ENCODE measurements at regions of chr3 and their contacts with region 1.

Region 1: GRCh38 chr3:98522244-98523090 is at the start of gene CLDND1:
- DNase-seq: peak; percentile 94 to 97
- ATAC-seq: peak; percentile 93 to 96
- H3K4me3 ChIP-seq: peak within 1 kb of the TSS; percentile 72 to 87 (median 75)
- H3K27ac ChIP-seq: peak within 1 kb of the TSS; percentile 90 to 98 (median 95)
- H3K4me1 ChIP-seq: peaks cover 14 to 20% of the 10 kb centered on the region in 2 donors
- H3K27me3 ChIP-seq: no peaks in the 10 kb centered on the region
- CTCF ChIP-seq: peak in 1 of 5 experiments; percentile 9
- POLR2A ChIP-seq: peak; percentile 87 to 88
- total RNA-seq, gene CLDND1: 47.5 to 115 (median 87.2) TPM

Region 2: DNA sequence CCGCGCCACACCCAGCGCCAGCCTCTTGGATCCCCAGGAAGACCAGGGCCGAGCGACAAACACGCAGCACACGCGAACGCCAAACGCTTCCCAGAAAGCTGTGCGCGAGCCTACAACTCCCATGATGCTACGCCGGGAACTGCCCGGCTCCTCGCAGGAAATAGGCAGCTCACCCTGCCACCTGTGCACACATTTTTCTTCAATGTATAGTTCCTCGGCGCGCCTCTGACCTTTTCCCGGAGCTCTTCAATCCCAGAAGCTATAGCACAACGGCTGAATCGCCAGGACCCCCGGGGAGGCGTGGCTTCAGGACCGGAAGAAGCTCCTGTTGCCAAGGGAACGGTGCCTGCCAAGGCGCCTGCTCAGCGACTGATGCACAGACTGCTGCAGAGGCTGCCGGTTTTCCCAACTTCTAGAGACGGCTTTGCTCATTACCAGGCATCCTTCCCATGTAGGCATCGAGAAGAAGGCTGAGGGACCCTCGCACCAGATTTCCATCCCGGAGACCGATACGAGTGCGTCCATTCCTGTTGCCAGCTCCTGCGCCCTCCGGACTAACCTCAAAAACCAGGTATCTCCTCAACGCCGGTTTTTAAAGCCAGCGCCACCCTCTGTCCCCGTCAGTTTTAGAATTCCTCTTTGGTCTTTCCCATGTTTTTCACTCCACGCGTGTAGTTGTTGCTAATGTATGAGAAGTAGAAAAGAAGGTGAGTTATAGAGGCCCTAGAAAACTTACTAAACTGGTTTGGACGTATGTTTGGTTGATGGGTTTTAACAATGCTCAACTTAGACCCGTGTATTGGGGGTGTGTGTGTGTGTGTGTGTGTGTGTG is 757.8 kb before region 1 on chr3 and contains the start of gene ARL6:
- in situ Hi-C with region 1: no loop called
- intact Hi-C with region 1: loop called (anchors 2 kb)
- DNase-seq: peak; percentile 55 to 71
- ATAC-seq: peak; percentile 98 to 99
- H3K4me3 ChIP-seq: peak within 1 kb of the TSS; percentile 84 to 97 (median 96)
- H3K27ac ChIP-seq: peak within 1 kb of the TSS; percentile 71 to 85 (median 78)
- H3K4me1 ChIP-seq: peaks cover 8 to 20% of the 10 kb centered on the region in 2 donors
- H3K27me3 ChIP-seq: no peaks in the 10 kb centered on the region
- CTCF ChIP-seq: no peak
- POLR2A ChIP-seq: no peak
- total RNA-seq, gene ARL6: 1.2 to 4.3 (median 3.2) TPM

Region 3: GRCh38 chr3:97821810-97822775 is 700.4 kb before region 1 on chr3 and contains the start of gene CRYBG3:
- in situ Hi-C with region 1: no loop called
- intact Hi-C with region 1: loop called (anchors 2 kb)
- DNase-seq: peak; percentile 70 to 74
- ATAC-seq: peak; percentile 69 to 81
- H3K4me3 ChIP-seq: peak within 1 kb of the TSS; percentile 94 to 97 (median 96)
- H3K27ac ChIP-seq: peak within 1 kb of the TSS; percentile 89 to 97 (median 95)
- H3K4me1 ChIP-seq: peaks cover 39 to 40% of the 10 kb centered on the region in 2 donors
- H3K27me3 ChIP-seq: no peaks in the 10 kb centered on the region
- CTCF ChIP-seq: peak in 2 of 5 experiments; percentile 16 to 30
- POLR2A ChIP-seq: peak; percentile 88 to 93
- total RNA-seq, gene CRYBG3: 23.0 to 47.3 (median 24.8) TPM

Region 4: DNA sequence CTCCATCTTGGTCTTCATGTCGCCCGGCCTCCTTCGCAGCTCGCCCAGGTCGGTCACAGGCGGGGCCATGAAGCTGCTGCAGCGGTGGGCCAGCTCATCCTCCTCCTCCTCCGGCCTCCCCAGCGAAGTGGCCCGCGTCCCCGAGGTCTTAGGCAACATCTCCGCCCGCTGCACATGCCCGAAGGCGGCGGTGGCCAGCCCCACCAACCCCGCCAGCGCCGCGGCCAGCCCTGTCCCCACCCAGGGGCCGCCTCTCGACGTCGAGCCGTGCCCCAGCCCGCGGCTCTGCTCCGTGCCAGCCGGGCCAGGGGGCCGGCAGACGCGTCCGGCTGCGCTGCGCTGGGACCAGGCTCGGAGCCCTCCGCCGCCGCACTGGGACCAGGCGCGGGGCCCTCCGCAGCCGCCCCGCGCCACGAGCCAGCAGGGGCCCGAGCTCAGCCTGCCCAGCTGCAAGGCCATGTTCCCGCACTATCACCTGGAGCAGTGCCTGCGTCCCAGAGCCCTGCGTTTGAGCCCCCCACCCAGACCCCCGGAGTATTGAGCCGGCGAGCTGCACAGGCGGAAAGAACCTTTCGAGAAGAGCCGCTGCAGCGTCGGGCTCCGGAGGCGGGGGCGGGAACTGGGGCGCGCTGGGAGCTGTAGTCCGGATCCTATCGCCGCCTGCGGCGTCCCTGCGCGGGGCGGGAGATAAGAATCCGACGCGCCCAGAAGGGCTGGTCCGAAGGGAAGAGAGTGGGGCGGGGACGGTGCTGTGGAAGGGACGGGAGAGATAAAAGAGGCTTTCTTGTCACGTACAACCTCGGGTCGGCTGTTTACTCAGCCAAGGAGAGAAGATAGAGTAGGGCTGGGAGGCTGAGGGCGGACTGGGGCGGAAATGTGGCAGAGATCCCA is 70.8 kb after region 1 on chr3 and contains the start of gene CPOX:
- in situ Hi-C with region 1: loop called in 1 of 4 experiments (anchors 10 kb)
- intact Hi-C with region 1: loop called (anchors 1 kb)
- DNase-seq: peak; percentile 63 to 73
- ATAC-seq: peak; percentile 94 to 95
- H3K4me3 ChIP-seq: peak within 1 kb of the TSS; percentile 73 to 91 (median 78)
- H3K27ac ChIP-seq: peak within 1 kb of the TSS; percentile 72 to 85 (median 78)
- H3K4me1 ChIP-seq: peaks cover 9 to 12% of the 10 kb centered on the region in 2 donors
- H3K27me3 ChIP-seq: no peaks in the 10 kb centered on the region
- CTCF ChIP-seq: no peak
- POLR2A ChIP-seq: peak; percentile 32 to 39
- total RNA-seq, gene CPOX: 9.8 to 25.6 (median 15.1) TPM

Region 5: GRCh38 chr3:98901392-98902350 is 379.2 kb after region 1 on chr3 and contains the start of gene DCBLD2:
- in situ Hi-C with region 1: no loop called
- intact Hi-C with region 1: loop called (anchors 2 kb)
- DNase-seq: peak; percentile 98
- ATAC-seq: peak; percentile 99
- H3K4me3 ChIP-seq: peak within 1 kb of the TSS; percentile 83 to 96 (median 88)
- H3K27ac ChIP-seq: peak within 1 kb of the TSS; percentile 87 to 91 (median 89)
- H3K4me1 ChIP-seq: peaks cover 4 to 15% of the 10 kb centered on the region in 2 donors
- H3K27me3 ChIP-seq: no peaks in the 10 kb centered on the region
- CTCF ChIP-seq: no peak
- POLR2A ChIP-seq: peak; percentile 87 to 95
- total RNA-seq, gene DCBLD2: 5.6 to 9.0 (median 6.7) TPM

Region 6: DNA sequence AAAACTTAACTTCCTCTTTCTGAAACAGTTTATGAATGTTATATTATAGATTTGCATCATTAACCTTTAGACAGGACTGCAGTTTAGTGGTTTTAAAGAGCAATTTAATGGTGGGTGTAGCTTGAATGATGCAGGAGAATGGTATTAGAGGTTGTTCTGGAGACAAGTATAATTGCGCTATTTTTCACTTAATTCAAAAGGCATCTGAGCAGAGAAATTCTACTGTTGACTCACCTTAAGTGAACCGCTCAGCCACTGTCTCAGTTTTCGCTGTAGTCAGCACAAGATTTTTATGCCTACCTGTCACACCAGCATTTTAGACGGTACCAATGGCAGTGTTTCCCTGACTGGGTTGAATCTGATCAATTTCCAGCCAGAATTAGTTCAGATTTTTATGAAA is 727.8 kb after region 1 on chr3:
- in situ Hi-C with region 1: no loop called
- intact Hi-C with region 1: no loop called
- DNase-seq: no peak
- ATAC-seq: no peak
- H3K4me3 ChIP-seq: no peak overlapping the region
- H3K27ac ChIP-seq: no peak overlapping the region
- H3K4me1 ChIP-seq: no peaks in the 10 kb centered on the region
- H3K27me3 ChIP-seq: no peaks in the 10 kb centered on the region
- CTCF ChIP-seq: no peak
- POLR2A ChIP-seq: no peak